ENCODE measurements at regions of chr11 and their contacts with region 1.

Region 1: DNA sequence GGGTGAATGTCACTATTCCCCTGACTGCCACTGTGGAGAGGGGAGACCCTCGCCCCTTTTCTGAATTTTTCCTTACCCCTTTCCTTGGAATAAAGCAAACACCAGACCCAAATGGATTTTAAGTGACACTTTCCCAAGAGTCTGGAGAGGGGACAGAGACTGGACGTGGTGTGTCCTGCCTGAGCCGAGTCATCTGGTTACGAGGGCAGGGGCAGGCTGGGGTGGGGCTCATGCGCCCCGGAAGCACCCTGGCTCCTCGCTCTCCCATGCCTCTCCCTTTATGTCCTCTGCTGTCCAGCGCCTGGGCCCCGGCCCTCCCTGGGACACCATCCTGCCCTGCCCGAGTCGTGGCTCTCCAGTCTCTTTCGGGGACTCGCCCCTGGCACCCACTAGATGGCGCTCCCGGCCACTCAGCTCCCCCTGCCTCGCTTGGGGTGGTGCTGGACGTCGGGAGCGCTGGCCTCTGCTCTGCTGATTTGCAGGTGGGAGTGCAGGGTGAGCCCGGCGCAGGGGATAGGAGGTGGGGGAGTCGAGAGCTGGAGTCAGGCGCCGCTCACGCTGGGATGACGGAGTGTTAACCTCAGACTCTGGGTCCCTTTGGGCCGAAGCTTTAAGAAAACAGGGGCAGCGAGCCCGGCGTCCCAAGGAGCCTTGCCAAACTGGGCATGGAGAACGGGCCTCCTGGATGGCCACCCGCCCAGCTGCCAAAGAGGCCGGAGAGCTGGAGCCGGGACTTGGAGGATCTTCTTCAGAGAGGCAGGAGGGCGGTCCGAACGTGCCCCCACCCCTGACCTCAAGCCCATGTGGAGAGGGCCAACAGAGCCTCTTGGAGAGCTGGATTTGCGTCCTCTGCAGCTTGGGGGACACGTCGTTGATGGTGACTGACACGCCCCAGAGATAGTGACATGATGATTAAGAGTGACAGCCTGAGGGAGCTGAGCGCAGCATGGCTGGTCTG is 89.9 kb downstream of the RPS6KA4 start:
- DNase-seq: peak; percentile 81
- ATAC-seq: peak; percentile 88
- H3K4me3 Mint-ChIP-seq: peak overlapping the region; percentile 41
- H3K27ac Mint-ChIP-seq: no peak overlapping the region
- H3K4me1 Mint-ChIP-seq: peaks cover 17% of the 10 kb centered on the region
- H3K27me3 Mint-ChIP-seq: peaks cover 34% of the 10 kb centered on the region

Region 2: DNA sequence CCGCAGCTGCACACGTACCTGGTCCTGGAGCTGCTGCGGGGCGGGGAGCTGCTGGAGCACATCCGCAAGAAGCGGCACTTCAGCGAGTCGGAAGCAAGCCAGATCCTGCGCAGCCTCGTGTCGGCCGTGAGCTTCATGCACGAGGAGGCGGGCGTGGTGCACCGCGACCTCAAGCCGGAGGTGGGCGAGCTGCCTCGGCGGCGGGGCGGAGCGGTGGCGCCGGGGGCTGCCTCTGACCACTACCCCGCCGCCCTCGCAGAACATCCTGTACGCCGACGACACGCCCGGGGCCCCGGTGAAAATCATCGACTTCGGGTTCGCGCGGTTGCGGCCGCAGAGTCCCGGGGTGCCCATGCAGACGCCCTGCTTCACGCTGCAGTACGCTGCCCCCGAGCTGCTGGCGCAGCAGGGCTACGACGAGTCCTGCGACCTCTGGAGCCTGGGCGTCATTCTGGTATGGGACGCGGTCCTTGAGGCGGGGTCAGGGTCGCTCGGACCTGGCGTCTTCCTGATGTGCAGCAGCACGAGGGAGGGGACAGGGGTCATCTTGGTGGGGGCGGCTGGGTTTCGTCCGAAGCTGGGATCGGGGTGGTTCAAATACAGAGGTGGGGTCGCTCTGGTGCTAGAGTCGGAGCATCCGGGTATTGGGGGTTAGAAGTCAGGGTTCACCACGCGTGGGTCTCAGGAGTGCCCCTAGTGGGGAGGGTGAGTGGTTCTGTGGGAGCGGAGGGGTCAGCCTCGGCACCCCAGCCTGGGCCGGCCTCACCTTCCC is 79.3 kb before region 1 on chr11:
- CTCF ChIA-PET with region 1: no interaction called
- DNase-seq: no peak
- ATAC-seq: no peak
- H3K4me3 Mint-ChIP-seq: no peak overlapping the region
- H3K27ac Mint-ChIP-seq: no peak overlapping the region
- H3K4me1 Mint-ChIP-seq: no peaks in the 10 kb centered on the region
- H3K27me3 Mint-ChIP-seq: no peaks in the 10 kb centered on the region

Region 3: DNA sequence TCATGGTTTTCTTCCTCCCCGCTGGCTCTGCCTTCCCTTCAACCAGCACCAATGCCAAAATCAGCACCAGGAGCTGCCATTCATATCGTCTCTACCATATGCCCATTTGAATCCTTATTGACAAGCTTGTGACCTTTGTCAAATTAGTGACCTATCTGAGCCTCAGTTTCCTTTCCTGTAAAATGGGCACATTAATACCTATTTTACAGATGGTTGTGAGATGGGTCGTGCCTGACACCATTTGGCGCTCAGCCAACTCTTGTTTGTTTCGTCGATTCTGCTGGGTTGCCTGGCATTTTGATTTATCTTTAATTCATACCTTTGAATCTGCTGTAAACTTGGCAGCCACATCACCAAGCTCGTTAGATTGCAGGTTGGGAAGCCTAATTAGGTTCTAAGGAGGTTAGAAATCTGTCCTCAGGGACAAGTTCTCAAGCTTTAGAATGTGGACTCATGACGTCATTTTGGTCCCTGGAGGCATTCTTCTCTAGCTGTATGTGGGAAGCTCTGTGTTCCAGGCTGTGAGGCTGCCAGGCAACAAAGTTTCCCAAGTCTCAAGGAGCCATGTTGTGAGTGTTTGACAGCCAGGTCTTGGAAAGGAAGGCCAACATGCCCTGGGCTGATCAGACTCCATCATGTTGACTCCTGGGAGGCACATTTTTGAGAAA is 28.9 kb before region 1 on chr11:
- CTCF ChIA-PET with region 1: interaction called, 20 read pairs
- DNase-seq: no peak
- ATAC-seq: no peak
- H3K4me3 Mint-ChIP-seq: no peak overlapping the region
- H3K27ac Mint-ChIP-seq: no peak overlapping the region
- H3K4me1 Mint-ChIP-seq: no peaks in the 10 kb centered on the region
- H3K27me3 Mint-ChIP-seq: peaks cover 6% of the 10 kb centered on the region

Region 4: GRCh38 chr11:64458997-64459396 is 10.1 kb after region 1 on chr11:
- CTCF ChIA-PET with region 1: interaction called, 17 read pairs
- DNase-seq: no peak
- ATAC-seq: no peak
- H3K4me3 Mint-ChIP-seq: no peak overlapping the region
- H3K27ac Mint-ChIP-seq: no peak overlapping the region
- H3K4me1 Mint-ChIP-seq: no peaks in the 10 kb centered on the region
- H3K27me3 Mint-ChIP-seq: peaks cover 10% of the 10 kb centered on the region

Region 5: DNA sequence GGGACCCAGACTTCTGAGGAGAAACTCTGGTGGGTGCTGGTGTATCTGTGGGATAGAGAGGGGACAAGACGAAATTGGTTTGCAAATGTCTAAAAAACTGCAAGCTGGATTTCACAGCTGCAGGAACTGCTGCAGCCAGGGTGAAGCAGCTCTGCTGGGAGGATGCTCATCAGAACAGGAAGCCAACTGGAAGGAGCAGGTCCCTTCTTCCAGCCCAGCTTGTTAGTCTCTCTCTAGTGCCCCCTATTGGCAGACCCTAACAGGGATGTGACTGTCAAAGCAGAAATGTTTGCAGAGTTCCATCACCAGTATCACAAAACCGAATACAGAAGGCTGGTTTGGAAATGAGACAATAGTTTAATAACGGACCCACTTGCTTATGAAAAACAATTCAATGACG is 67.3 kb after region 1 on chr11:
- CTCF ChIA-PET with region 1: interaction called, 12 read pairs
- DNase-seq: peak; percentile 44
- ATAC-seq: no peak
- H3K4me3 Mint-ChIP-seq: no peak overlapping the region
- H3K27ac Mint-ChIP-seq: no peak overlapping the region
- H3K4me1 Mint-ChIP-seq: no peaks in the 10 kb centered on the region
- H3K27me3 Mint-ChIP-seq: peaks cover 19% of the 10 kb centered on the region

Measured in activated CD8-positive, alpha-beta memory T cell treated with anti-CD3 and anti-CD28 coated beads, Interleukin-2, amount 10 ng/mL, durations not matched to agents 7 days and 5 days (primary cell).